ENCODE measurements at regions of chr19 and their contacts with region 1.

Region 1: DNA sequence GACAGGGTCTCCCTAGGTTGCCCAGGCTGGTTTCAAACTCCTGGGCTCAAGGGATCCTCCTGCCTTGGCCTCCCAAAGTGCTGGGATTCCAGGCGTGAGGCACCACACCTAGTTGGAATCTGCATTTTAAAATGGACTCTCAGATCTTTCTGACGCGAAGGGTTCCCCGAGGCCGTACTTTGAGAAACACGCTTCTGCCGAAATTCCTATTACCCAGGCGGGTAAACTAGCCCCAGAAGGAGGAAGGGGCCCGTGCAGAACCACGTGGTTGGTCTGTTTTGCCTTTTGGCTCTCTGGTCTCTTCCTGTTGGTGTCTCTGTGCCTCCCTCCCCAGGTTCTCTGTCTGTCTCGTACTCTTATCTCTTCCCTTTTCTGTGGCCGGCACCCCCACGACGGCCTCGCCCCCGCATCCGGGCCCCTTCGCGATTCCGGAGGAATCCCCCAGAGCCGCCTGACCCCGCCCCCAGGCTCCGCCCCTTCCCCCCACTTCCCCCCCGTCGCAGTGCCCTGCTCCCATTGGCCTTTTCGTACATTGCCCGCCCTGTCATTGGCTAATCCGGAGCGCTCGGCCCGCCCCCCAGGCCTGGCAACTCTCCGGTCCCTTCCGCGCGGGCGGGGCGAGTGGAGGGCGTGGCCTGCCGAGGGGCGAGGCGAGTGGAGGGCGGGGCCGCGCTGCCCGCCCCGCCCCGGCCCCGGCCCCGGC is at the start of gene TNFAIP8L1:
- DNase-seq: peak; percentile 100
- ATAC-seq: peak; percentile 95
- H3K4me3 Mint-ChIP-seq: peak within 1 kb of the TSS; percentile 90
- H3K27ac Mint-ChIP-seq: peak within 1 kb of the TSS; percentile 97
- H3K4me1 Mint-ChIP-seq: peaks cover 26% of the 10 kb centered on the region
- H3K27me3 Mint-ChIP-seq: no peaks in the 10 kb centered on the region
- total RNA-seq, gene TNFAIP8L1: 14.1 to 15.4 TPM

Region 2: GRCh38 chr19:4328243-4328990 is 310.6 kb before region 1 on chr19:
- CTCF ChIA-PET with region 1: no interaction called
- POLR2A ChIA-PET with region 1: no interaction called
- intact Hi-C with region 1: loop called in 1 of 2 experiments (anchors 1 kb)
- DNase-seq: peak; percentile 100
- ATAC-seq: peak; percentile 85
- H3K4me3 Mint-ChIP-seq: peak overlapping the region; percentile 93
- H3K27ac Mint-ChIP-seq: peak overlapping the region; percentile 94
- H3K4me1 Mint-ChIP-seq: peaks cover 27% of the 10 kb centered on the region
- H3K27me3 Mint-ChIP-seq: no peaks in the 10 kb centered on the region

Region 3: GRCh38 chr19:4471403-4472173 is 167.4 kb before region 1 on chr19:
- CTCF ChIA-PET with region 1: no interaction called
- POLR2A ChIA-PET with region 1: no interaction called
- intact Hi-C with region 1: loop called (anchors 1 to 5 kb)
- DNase-seq: peak; percentile 98
- ATAC-seq: peak; percentile 90
- H3K4me3 Mint-ChIP-seq: no peak overlapping the region
- H3K27ac Mint-ChIP-seq: no peak overlapping the region
- H3K4me1 Mint-ChIP-seq: peaks cover 21% of the 10 kb centered on the region
- H3K27me3 Mint-ChIP-seq: no peaks in the 10 kb centered on the region

Region 4: GRCh38 chr19:4567584-4568071 is 71.4 kb before region 1 on chr19:
- CTCF ChIA-PET with region 1: interaction called, 28 read pairs
- POLR2A ChIA-PET with region 1: no interaction called
- intact Hi-C with region 1: loop called in 1 of 2 experiments (anchors 1 kb)
- DNase-seq: peak; percentile 85
- ATAC-seq: peak; percentile 94
- H3K4me3 Mint-ChIP-seq: no peak overlapping the region
- H3K27ac Mint-ChIP-seq: no peak overlapping the region
- H3K4me1 Mint-ChIP-seq: no peaks in the 10 kb centered on the region
- H3K27me3 Mint-ChIP-seq: peaks cover 4% of the 10 kb centered on the region

Region 5: DNA sequence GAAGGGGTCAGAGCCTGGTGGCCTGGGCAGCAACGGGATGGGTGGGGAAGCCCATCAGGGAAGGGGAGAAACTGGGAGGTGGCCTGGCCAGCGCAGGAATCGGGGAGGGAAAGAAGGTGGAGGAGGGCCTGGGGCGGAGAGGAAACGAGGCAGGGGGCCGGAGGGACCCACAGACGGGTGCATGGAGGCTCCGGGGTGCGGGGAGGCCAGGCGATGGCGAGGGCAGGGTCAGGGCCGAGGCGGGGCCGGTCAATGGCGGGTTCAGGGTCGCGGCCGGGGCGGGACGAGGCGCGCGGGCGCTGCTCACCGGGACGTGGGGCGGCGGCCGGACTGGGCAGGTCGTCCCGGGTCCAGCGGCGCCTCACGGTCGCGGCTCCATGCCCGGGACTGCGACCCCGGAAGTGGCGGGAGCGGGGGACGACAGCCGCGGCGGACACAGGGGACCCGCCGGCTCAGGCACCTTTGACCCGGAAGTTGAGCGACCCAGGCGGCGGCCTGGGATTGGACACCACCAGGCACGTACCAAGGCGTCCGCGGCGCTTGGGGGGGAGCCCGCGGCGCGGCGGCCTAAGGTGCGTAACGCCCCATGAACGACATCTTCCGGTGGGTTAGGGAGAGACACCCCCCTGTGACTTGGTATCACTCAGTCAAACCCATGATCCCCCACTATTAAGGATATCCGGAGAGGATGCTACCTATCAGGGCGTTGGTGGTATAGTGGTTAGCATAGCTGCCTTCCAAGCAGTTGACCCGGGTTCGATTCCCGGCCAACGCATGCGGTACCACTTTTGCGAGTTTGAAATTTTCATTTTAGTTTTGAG is 84.6 kb after region 1 on chr19 and contains the start of gene DPP9:
- CTCF ChIA-PET with region 1: no interaction called
- POLR2A ChIA-PET with region 1: no interaction called
- intact Hi-C with region 1: loop called in 1 of 2 experiments (anchors 1 kb)
- DNase-seq: peak; percentile 98
- ATAC-seq: peak; percentile 95
- H3K4me3 Mint-ChIP-seq: peak within 1 kb of the TSS; percentile 92
- H3K27ac Mint-ChIP-seq: peak within 1 kb of the TSS; percentile 93
- H3K4me1 Mint-ChIP-seq: peaks cover 26% of the 10 kb centered on the region
- H3K27me3 Mint-ChIP-seq: no peaks in the 10 kb centered on the region
- total RNA-seq, gene DPP9: 49.2 to 51.3 TPM

Region 6: DNA sequence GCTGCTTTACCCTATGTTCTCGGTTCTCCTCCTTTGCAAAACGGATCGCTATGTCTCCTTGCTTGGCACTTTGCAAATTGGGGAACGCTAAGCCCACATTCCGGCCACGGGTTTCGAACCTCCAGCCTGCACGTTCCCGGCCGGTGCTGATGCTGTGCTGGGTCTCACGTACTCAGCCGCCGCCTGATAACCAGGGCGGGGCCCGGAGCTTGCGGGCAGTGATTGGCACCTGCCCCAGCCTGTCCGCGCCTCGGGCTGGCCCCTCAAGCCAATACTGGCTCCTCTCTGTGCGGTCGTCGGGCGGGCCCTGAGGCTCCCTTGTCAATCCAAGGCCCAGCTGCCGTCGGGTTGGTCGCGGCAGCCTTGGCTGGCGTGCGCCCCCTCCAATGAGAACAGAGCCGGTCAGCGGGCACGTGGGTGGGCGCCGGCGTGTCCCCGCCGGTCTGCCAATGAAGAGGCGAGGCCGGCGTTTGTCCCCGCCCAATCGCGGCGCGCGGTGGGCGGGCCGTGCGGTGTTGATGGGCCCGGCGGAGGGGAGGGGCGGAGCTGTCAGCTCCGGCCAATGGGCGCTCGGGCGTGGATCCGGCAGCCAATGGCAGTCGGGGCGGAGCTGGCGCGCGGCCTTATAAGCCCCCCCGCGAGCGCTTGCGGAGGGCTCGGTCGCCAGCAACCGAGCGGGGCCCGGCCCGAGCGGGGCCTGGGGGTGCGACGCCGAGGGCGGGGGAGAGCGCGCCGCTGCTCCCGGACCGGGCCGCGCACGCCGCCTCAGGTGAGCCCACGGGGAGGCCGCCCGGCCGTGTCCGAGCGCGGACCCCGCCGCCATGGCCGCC is 329.7 kb after region 1 on chr19 and contains the start of gene KDM4B:
- CTCF ChIA-PET with region 1: no interaction called
- POLR2A ChIA-PET with region 1: no interaction called
- intact Hi-C with region 1: loop called in 1 of 2 experiments (anchors 1 kb)
- DNase-seq: peak; percentile 100
- ATAC-seq: peak; percentile 96
- H3K4me3 Mint-ChIP-seq: peak within 1 kb of the TSS; percentile 91
- H3K27ac Mint-ChIP-seq: peak within 1 kb of the TSS; percentile 90
- H3K4me1 Mint-ChIP-seq: peaks cover 30% of the 10 kb centered on the region
- H3K27me3 Mint-ChIP-seq: no peaks in the 10 kb centered on the region
- total RNA-seq, gene KDM4B: 33.9 to 35.8 TPM

Measured in activated CD4-positive, alpha-beta T cell treated with anti-CD3 and anti-CD28 coated beads for 36 hours (primary cell).